ENCODE measurements at regions of chr11 and their contacts with region 1.

Region 1: GRCh38 chr11:11966826-11967668 is 41.4 kb downstream of the DKK3 start:
- DNase-seq: peak; percentile 81
- H3K4me3 Mint-ChIP-seq: no peak overlapping the region
- H3K27ac Mint-ChIP-seq: no peak overlapping the region
- H3K4me1 Mint-ChIP-seq: peaks cover 5% of the 10 kb centered on the region
- H3K27me3 Mint-ChIP-seq: peaks cover 11% of the 10 kb centered on the region

Region 2: GRCh38 chr11:11884774-11885481 is 82.1 kb before region 1 on chr11:
- CTCF ChIA-PET with region 1: no interaction called
- POLR2A ChIA-PET with region 1: no interaction called
- DNase-seq: no peak
- H3K4me3 Mint-ChIP-seq: peak overlapping the region; percentile 2
- H3K27ac Mint-ChIP-seq: peak overlapping the region; percentile 63
- H3K4me1 Mint-ChIP-seq: peaks cover 41% of the 10 kb centered on the region
- H3K27me3 Mint-ChIP-seq: no peaks in the 10 kb centered on the region

Region 3: DNA sequence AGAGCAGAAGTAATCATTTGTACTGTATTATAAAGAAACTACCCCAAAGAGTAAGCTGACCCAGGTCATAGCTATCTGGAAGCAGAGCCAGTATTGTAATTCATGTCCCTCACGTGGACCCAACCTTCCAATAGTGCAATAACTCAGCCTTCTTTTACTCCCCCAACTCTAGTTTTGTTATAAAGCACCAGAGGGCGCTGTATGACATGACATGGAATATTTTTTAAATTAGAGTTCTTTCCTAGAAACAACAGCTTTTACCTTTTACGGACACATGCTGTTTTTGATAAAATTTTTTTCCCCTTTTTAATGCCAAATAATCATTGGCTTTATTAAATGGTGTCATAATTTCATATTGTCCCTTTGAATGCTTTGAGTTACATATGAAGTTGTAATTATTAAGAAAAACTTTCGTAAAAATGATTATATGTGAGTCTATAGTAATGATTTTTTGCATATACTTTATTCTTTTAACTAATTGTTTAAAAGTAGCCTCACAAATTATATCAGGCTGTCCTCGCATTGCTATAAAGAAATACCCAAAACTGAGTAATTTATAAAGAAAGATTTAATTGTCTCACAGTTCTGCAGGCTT is 35.5 kb before region 1 on chr11:
- CTCF ChIA-PET with region 1: interaction called, 11 read pairs
- POLR2A ChIA-PET with region 1: interaction called, 3 read pairs
- DNase-seq: no peak
- H3K4me3 Mint-ChIP-seq: no peak overlapping the region
- H3K27ac Mint-ChIP-seq: no peak overlapping the region
- H3K4me1 Mint-ChIP-seq: peaks cover 6% of the 10 kb centered on the region
- H3K27me3 Mint-ChIP-seq: no peaks in the 10 kb centered on the region

Region 4: DNA sequence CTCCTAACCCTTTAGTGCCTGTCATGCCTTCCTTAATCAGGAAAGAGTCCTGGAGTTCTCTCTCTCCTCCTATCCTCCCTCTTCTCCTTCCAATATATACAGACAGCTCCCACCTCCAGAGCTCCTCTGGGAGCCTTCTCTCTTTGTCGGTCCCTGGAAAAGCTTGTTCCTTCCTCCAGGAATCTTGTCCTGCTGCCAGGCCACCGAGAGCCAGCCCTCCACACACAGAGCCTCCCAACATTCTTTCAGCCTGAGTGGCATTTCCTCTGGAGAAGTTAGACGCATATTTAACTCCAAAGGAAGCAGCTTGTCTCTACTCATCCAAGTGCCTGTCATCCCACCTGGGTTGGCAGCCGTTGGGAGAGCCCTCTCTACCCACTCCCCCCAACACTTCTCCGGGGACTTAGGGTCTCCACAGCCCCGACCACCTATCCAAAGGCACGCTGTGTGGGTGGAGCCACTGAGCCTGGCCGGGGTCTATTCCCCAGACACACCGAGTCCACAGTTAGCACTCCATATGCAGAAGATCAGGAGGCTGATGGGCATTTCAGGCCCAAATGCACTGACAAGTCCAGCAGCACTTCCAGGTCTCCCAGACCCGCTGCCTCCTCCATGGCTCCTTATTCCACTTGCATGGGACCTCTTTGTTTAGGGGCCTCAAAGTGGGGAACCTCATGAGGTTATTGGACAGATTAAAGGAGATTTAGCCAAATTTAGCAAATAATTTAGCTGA is 10.3 kb after region 1 on chr11:
- CTCF ChIA-PET with region 1: interaction called, 13 read pairs
- POLR2A ChIA-PET with region 1: interaction called, 3 read pairs
- DNase-seq: no peak
- H3K4me3 Mint-ChIP-seq: no peak overlapping the region
- H3K27ac Mint-ChIP-seq: no peak overlapping the region
- H3K4me1 Mint-ChIP-seq: peaks cover 24% of the 10 kb centered on the region
- H3K27me3 Mint-ChIP-seq: peaks cover 2% of the 10 kb centered on the region

Region 5: GRCh38 chr11:12137938-12138731 is 171.1 kb after region 1 on chr11:
- CTCF ChIA-PET with region 1: no interaction called
- POLR2A ChIA-PET with region 1: no interaction called
- DNase-seq: no peak
- H3K4me3 Mint-ChIP-seq: no peak overlapping the region
- H3K27ac Mint-ChIP-seq: peak overlapping the region; percentile 65
- H3K4me1 Mint-ChIP-seq: peaks cover 58% of the 10 kb centered on the region
- H3K27me3 Mint-ChIP-seq: no peaks in the 10 kb centered on the region